GM12878 (cell line): ENCODE measurements at regions of chr10 and their contacts with region 1.

Region 1: DNA sequence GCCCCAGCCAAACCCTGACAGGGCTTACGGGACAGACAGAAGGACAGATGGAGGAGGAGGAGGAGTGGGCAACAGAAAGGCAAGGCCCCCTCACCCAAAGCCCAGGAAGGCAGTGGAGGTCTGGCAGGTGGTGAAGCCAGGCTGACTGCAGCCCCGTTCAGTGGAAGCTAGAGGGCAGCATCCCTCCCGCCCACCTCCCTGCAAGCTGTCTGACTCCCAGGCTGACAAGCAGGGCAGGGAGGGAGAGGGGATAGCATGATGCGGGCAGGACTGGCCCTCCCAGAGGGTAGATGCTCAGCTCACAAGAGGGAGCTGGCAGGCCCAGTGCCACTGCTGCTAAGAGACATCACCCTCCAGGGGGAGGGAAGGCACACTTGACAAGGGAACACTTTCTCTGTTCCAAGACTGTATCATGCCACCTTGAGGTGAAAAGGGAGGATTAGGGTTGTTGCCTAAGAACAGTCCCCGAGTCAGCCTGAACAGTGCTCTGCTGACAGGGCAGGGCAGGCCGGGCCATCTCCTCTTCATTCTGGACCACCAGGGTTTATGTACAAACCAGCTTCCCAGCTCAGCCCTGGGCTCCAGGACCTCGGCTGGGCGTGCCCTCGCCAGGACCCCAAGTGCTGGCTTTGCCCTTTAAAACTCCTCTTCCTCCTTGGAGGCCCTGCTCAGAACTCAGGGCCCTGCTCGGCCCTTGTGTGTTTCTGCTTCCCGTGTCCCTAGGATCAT is 61.8 kb downstream of the RASGEF1A start:
- DNase-seq: peak; percentile 11
- ATAC-seq: peak; percentile 82
- H3K4me3 ChIP-seq: no peak overlapping the region
- H3K27ac ChIP-seq: no peak overlapping the region
- H3K4me1 ChIP-seq: no peaks in the 10 kb centered on the region
- H3K27me3 ChIP-seq: no peaks in the 10 kb centered on the region
- CTCF ChIP-seq: peak; percentile 76 to 93 (median 88)
- EP300 ChIP-seq: no peak
- POLR2A ChIP-seq: no peak
- RAD21 ChIP-seq: peak; percentile 50

Region 2: GRCh38 chr10:43249962-43250614 is 45.0 kb after region 1 on chr10:
- CTCF ChIA-PET with region 1: interaction called, 60 read pairs
- POLR2A ChIA-PET with region 1: no interaction called
- RAD21 ChIA-PET with region 1: interaction called, 22 read pairs
- SMC1A ChIA-PET with region 1: interaction called, 14 read pairs
- in situ Hi-C with region 1: no loop called
- intact Hi-C with region 1: no loop called
- DNase-seq: no peak
- ATAC-seq: no peak
- H3K4me3 ChIP-seq: no peak overlapping the region
- H3K27ac ChIP-seq: no peak overlapping the region
- H3K4me1 ChIP-seq: no peaks in the 10 kb centered on the region
- H3K27me3 ChIP-seq: no peaks in the 10 kb centered on the region
- CTCF ChIP-seq: no peak
- EP300 ChIP-seq: no peak
- POLR2A ChIP-seq: no peak
- RAD21 ChIP-seq: no peak

Region 3: GRCh38 chr10:43292755-43293676 is 87.9 kb after region 1 on chr10:
- CTCF ChIA-PET with region 1: interaction called, 19 read pairs
- POLR2A ChIA-PET with region 1: no interaction called
- RAD21 ChIA-PET with region 1: no interaction called
- SMC1A ChIA-PET with region 1: no interaction called
- in situ Hi-C with region 1: no loop called
- intact Hi-C with region 1: no loop called
- DNase-seq: no peak
- ATAC-seq: peak; percentile 93
- H3K4me3 ChIP-seq: no peak overlapping the region
- H3K27ac ChIP-seq: no peak overlapping the region
- H3K4me1 ChIP-seq: no peaks in the 10 kb centered on the region; the same call in 1 of the 2 replicates
- H3K27me3 ChIP-seq: no peaks in the 10 kb centered on the region
- CTCF ChIP-seq: peak; percentile 67 to 76 (median 75)
- EP300 ChIP-seq: no peak
- POLR2A ChIP-seq: no peak
- RAD21 ChIP-seq: peak; percentile 66

Region 4: GRCh38 chr10:43361986-43362839 is 157.1 kb after region 1 on chr10:
- CTCF ChIA-PET with region 1: no interaction called
- POLR2A ChIA-PET with region 1: no interaction called
- RAD21 ChIA-PET with region 1: no interaction called
- SMC1A ChIA-PET with region 1: no interaction called
- in situ Hi-C with region 1: loop called (anchors 25 kb)
- intact Hi-C with region 1: no loop called
- DNase-seq: peak; percentile 75
- ATAC-seq: peak; percentile 98
- H3K4me3 ChIP-seq: peak overlapping the region; percentile 77
- H3K27ac ChIP-seq: peak overlapping the region; percentile 56
- H3K4me1 ChIP-seq: peaks cover 4% of the 10 kb centered on the region
- H3K27me3 ChIP-seq: no peaks in the 10 kb centered on the region
- CTCF ChIP-seq: peak; percentile 25 to 38 (median 31); a peak in 4 of 6 replicates
- EP300 ChIP-seq: no peak
- POLR2A ChIP-seq: peak; percentile 75
- RAD21 ChIP-seq: no peak